ENCODE measurements at regions of chr2 and their contacts with region 1.

Region 1: DNA sequence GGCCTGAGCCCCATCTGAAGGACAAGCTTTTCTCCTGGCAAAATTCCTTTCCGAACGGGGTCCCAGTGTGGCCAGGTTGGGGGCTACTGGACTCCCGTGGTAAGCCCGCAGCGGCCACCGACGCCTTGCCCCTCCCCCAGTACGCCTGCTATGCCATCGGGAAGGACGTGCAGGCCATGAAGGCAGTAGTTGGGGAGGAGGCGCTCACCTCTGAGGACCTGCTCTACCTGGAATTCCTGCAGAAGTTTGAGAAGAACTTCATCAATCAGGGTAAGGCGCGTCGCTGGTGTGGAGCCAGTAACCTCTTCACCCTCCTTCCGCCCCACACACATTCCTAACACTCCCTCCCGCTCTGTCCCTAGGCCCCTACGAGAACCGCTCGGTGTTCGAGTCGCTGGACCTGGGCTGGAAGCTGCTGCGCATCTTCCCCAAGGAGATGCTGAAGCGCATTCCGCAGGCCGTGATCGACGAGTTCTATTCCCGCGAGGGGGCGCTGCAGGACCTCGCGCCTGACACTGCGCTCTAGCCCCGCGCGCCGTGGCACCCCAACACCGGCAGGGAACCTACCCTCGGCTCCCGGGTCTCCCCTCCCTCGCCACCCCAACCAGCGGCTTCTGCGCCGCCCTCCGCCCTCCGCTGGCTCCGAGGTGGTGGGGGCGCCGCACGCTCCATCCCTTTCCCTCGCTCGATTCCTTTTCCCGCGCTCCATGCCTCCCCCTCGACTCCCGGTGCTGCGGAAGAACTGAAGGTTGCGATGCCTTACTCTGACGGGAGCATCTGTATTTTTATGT is 13.6 kb upstream of the ANKRD53 start:
- DNase-seq: peak; percentile 63 to 85 (median 79)
- ATAC-seq: peak; percentile 96
- H3K4me3 ChIP-seq: peak overlapping the region; percentile 68
- H3K4me3 Mint-ChIP-seq: peak overlapping the region; percentile 75 to 91 (median 88)
- H3K27ac ChIP-seq: no peak overlapping the region
- H3K27ac Mint-ChIP-seq: peak overlapping the region in 2 of 9 donors; percentile 38 to 81
- H3K4me1 ChIP-seq: peaks cover 3 to 4% of the 10 kb centered on the region in 2 donors
- H3K4me1 Mint-ChIP-seq: peaks cover 3 to 9% (median 8%) of the 10 kb centered on the region in 7 donors
- H3K27me3 ChIP-seq: no peaks in the 10 kb centered on the region
- H3K27me3 Mint-ChIP-seq: peaks cover 25 to 49% (median 32%) of the 10 kb centered on the region in 5 donors

Region 2: DNA sequence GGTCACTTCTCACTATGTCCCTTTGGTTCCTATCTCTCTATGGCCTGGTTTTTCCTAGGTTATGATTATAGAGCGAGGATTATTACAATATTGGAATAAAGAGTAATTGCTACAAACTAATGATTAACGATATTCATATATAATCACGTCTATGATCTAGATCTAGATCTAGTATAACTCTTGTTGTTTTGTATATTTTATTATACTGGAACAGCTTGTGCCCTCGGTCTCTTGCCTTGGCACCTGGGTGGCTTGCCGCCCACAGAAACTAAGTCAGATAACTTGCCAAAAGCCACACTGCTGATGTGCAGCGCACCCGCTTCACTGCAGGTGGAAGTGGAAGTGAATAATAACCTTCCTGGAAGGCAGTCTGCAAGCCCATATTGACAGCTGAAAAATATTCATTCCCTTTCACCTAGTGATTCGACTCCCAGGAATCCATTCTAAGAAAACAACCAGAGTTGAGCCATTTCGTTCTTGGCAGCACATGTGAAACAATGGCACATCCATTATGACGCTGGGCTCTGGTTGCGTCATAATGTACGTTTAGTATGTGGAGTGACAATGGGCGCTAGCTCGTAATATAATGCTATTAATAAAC is 12.9 kb after region 1 on chr2:
- CTCF ChIA-PET with region 1: interaction called, 23 read pairs
- POLR2A ChIA-PET with region 1: interaction called, 4 read pairs
- intact Hi-C with region 1: loop called (anchors 1 kb)
- DNase-seq: peak in 5 of 9 donors; percentile 25 to 42 (median 29)
- ATAC-seq: peak; percentile 28
- H3K4me3 ChIP-seq: peak overlapping the region; percentile 81
- H3K4me3 Mint-ChIP-seq: peak overlapping the region; percentile 76 to 95 (median 86)
- H3K27ac ChIP-seq: peak overlapping the region; percentile 36
- H3K27ac Mint-ChIP-seq: peak overlapping the region; percentile 60 to 93 (median 83)
- H3K4me1 ChIP-seq: peaks cover 9% of the 10 kb centered on the region in 2 donors
- H3K4me1 Mint-ChIP-seq: peaks cover 8 to 23% (median 16%) of the 10 kb centered on the region in 7 donors
- H3K27me3 ChIP-seq: no peaks in the 10 kb centered on the region
- H3K27me3 Mint-ChIP-seq: peaks cover 0 to 22% (median 2%) of the 10 kb centered on the region in 5 donors

Region 3: DNA sequence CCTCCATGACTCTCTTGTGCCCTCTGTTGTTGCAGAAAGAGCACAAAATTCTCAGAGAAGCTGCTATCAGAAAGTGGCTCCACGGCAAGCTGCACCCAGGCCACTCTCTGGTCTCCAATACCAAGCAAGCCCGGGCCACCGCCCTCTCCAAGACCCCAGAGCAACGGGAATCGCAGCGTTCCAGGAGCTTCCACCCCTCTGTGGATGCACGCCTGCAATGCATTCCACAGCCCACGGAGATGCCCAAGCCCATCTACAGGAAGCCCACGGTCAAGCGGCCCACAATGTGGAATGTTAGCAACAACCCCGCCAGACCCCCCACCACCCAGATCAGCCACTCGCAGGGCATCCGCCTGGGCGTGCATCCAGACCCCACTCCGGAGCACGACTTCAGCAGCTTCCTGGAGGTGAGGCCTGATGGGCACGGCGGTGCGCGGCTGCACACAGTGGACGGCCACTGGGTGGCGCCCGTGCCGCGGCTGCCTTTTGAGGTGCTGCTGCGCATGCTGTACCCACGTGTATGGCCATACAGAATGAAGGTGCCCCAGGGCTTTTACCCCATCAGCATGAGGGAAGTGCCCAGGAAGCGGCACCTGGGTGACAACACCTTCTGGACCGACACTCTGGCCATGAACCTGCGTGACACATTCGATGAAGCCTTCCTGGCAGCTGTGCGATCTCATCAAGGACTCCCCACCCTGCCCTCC is 19.9 kb after region 1 on chr2:
- CTCF ChIA-PET with region 1: interaction called, 23 read pairs
- POLR2A ChIA-PET with region 1: no interaction called
- intact Hi-C with region 1: loop called in 1 of 2 experiments (anchors 1 kb)
- DNase-seq: peak; percentile 71 to 86 (median 82)
- ATAC-seq: peak; percentile 100
- H3K4me3 ChIP-seq: no peak overlapping the region
- H3K4me3 Mint-ChIP-seq: peak overlapping the region in 8 of 10 donors; percentile 51 to 66 (median 57)
- H3K27ac ChIP-seq: peak overlapping the region; percentile 8
- H3K27ac Mint-ChIP-seq: peak overlapping the region in 6 of 9 donors; percentile 39 to 76 (median 45)
- H3K4me1 ChIP-seq: no peaks in the 10 kb centered on the region
- H3K4me1 Mint-ChIP-seq: peaks cover 7 to 22% (median 18%) of the 10 kb centered on the region in 7 donors
- H3K27me3 ChIP-seq: no peaks in the 10 kb centered on the region
- H3K27me3 Mint-ChIP-seq: no peaks in the 10 kb centered on the region

Region 4: DNA sequence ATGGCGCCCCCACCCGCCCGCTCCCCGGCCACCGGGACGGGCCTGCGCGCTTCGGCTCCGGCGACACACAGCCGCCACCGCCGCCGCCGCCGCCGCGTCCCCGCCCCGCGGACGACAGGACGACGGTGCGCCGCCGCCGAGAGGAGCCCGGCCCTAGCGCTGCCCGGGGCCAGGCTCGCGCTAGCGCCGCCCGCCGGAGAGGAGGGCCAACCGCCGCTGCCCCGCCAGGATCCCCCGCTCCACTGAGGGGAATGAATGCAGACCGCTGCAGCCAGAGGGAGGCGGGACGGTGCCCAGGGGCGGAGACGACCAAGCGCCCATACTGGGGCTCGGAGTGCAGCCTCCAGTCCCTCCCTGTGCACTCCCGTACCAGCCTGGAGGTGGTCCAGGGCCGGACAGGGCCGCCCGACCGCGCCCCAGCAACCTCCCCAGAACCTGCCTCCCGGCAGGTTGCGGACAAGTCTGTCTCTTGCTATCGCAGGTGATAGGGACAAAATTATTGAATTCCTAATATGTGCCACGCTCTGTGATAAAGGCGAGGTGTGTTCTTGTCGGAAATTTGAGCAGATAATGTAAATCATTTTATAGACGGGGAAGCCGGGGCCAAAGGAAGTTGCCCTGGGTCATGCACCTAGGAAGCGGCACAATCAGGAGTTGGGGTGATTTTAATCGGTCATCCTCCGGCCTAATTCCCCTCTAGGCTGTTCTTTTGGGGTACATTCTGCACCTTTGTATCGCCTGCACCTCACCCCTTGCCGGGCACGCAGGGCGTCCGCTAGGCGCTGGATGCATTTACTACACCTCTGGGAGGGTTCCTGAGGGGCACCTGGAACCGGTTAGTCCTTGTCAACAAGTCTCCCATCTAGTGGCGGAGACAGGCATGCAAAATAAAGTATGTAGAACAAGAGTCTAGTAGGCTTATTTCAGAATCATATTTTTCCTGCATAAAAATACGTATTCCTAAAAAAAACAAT is 30.3 kb after region 1 on chr2 and contains the start of gene TEX261:
- CTCF ChIA-PET with region 1: interaction called, 5 read pairs
- POLR2A ChIA-PET with region 1: no interaction called
- intact Hi-C with region 1: loop called (anchors 1 kb)
- DNase-seq: peak; percentile 81 to 97 (median 88)
- ATAC-seq: peak; percentile 98
- H3K4me3 ChIP-seq: peak within 1 kb of the TSS; percentile 92
- H3K4me3 Mint-ChIP-seq: peak within 1 kb of the TSS; percentile 95 to 100 (median 98)
- H3K27ac ChIP-seq: peak within 1 kb of the TSS; percentile 88
- H3K27ac Mint-ChIP-seq: peak within 1 kb of the TSS; percentile 88 to 99 (median 96)
- H3K4me1 ChIP-seq: peaks cover 19 to 21% of the 10 kb centered on the region in 2 donors
- H3K4me1 Mint-ChIP-seq: peaks cover 23 to 44% (median 36%) of the 10 kb centered on the region in 7 donors
- H3K27me3 ChIP-seq: no peaks in the 10 kb centered on the region
- H3K27me3 Mint-ChIP-seq: no peaks in the 10 kb centered on the region
- total RNA-seq, gene TEX261: 33.2 to 66.3 (median 56.4) TPM

Region 5: DNA sequence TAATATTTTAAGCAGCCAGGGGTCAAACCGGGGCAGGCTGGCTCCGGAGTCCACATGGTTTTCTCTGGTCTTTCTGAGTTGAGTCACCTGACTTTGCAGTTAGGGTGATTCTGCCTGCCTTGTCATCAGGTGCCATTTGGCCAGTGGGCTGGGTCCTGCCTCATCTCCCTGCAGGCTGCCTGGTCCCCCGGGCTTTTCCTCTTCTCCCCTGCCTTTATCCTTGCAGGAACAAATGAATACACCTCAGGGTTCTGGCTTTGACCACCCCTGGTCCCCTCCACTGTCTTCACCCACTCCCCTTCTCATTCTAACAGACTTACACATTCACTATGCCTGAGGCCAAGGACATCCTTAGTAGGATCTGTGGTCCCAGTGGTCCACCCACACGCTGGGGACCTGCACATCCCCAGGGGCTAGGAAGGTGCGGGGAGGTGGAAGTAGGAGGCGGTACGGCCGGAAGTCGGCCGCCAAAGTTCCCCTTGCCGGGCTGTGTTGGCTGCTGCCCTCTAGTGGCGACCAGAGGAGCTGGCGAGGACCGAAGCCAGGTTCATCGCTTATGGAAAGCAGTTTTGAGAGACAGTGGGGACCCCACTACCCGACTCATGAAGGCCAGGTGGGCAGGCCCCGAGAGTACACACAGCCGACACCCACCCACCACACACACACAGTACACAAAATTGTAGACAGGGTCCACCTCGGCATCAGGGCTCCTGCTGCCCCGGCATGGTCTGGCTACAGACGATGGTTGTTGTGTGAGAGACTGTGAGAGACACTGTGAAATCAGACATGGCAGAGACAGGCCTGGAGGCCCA is 36.2 kb after region 1 on chr2:
- CTCF ChIA-PET with region 1: interaction called, 12 read pairs
- POLR2A ChIA-PET with region 1: no interaction called
- intact Hi-C with region 1: loop called (anchors 1 kb)
- DNase-seq: peak; percentile 65 to 82 (median 76)
- ATAC-seq: peak; percentile 98
- H3K4me3 ChIP-seq: peak overlapping the region; percentile 66
- H3K4me3 Mint-ChIP-seq: peak overlapping the region; percentile 44 to 78 (median 64)
- H3K27ac ChIP-seq: peak overlapping the region; percentile 52
- H3K27ac Mint-ChIP-seq: peak overlapping the region in 8 of 9 donors; percentile 36 to 77 (median 60)
- H3K4me1 ChIP-seq: peaks cover 6 to 10% of the 10 kb centered on the region in 2 donors
- H3K4me1 Mint-ChIP-seq: peaks cover 6 to 29% (median 12%) of the 10 kb centered on the region in 7 donors
- H3K27me3 ChIP-seq: no peaks in the 10 kb centered on the region
- H3K27me3 Mint-ChIP-seq: peaks cover 0 to 6% (median 3%) of the 10 kb centered on the region in 5 donors

Region 6: DNA sequence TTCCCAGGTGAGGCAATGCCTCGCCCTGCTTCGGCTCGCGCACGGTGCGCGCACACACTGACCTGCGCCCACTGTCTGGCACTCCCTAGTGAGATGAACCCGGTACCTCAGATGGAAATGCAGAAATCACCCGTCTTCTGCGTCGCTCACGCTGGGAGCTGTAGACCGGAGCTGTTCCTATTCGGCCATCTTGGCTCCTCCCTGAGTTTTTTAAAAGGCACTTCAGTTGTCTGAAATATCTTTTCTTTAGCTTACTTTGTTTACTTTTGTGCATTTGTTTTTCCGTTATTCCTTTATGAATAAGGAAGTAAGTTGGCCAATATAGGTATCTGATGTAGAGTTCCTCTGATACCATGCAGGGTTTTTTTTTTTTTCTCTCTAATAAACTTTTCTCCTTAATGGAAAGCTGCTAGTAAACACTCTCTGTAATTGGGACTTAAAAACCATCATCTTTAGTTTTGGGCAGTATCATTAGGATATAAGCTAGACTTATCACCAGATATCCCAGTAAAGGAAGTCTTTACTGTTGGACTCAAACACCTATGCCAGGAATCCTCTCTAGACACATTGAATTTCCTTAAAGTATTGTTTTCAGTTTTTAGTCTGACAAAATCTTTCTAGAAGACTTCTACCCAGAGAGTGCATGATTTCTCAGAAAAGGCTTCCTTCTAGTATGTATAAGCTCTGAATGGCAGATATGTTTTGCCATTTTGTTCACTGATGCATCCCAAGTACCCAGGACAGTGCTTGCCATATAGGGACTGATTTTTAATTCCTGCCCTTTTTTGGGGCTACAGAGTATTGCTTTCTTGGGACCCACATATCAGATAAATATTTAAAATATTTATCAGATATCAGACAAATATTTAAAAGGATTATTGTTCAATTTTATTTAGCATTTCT is 452.8 kb after region 1 on chr2:
- CTCF ChIA-PET with region 1: no interaction called
- POLR2A ChIA-PET with region 1: no interaction called
- intact Hi-C with region 1: no loop called
- DNase-seq: peak in 2 of 9 donors; percentile 19 to 22
- ATAC-seq: peak; percentile 27
- H3K4me3 ChIP-seq: peak overlapping the region; percentile 40
- H3K4me3 Mint-ChIP-seq: peak overlapping the region; percentile 82 to 91 (median 88)
- H3K27ac ChIP-seq: peak overlapping the region; percentile 70
- H3K27ac Mint-ChIP-seq: peak overlapping the region; percentile 79 to 95 (median 92)
- H3K4me1 ChIP-seq: peaks cover 0 to 6% of the 10 kb centered on the region in 2 donors
- H3K4me1 Mint-ChIP-seq: peaks cover 1 to 24% (median 11%) of the 10 kb centered on the region in 7 donors
- H3K27me3 ChIP-seq: no peaks in the 10 kb centered on the region
- H3K27me3 Mint-ChIP-seq: no peaks in the 10 kb centered on the region

Measured in naive thymus-derived CD4-positive, alpha-beta T cell (primary cell).